ENCODE measurements at regions of chr14 and their contacts with region 1.

Region 1: GRCh38 chr14:74257078-74257989 is 18.1 kb downstream of the VSX2 start:
- DNase-seq: no peak
- H3K4me3 ChIP-seq: peak overlapping the region; percentile 57
- H3K27ac ChIP-seq: no peak overlapping the region
- H3K27me3 ChIP-seq: peaks cover 55% of the 10 kb centered on the region
- CTCF ChIP-seq: peak; percentile 68

Region 2: DNA sequence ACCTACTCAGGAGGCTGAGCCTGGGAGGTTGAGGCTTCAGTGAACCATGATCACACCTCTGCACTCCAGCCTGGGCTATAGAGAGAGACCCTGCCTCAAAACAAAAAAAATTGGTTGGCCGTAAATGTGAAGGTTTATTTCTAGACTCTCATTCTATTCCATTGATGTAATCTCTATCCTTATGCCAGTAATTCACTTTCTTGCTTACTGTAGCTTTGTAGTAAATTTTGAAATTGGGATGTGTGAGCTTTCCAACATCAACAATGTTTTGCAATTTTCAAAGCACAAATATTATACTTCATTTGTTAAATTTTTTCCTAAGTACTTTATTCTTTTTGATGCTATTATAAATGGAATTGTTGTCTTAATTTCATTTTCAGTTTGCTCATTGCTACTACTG is 148.0 kb before region 1 on chr14:
- CTCF ChIA-PET with region 1: interaction called, 39 read pairs
- POLR2A ChIA-PET with region 1: no interaction called
- DNase-seq: no peak
- H3K4me3 ChIP-seq: no peak overlapping the region
- H3K27ac ChIP-seq: no peak overlapping the region
- H3K27me3 ChIP-seq: no peaks in the 10 kb centered on the region
- CTCF ChIP-seq: no peak

Region 3: GRCh38 chr14:74179856-74180255 is 77.5 kb before region 1 on chr14:
- CTCF ChIA-PET with region 1: no interaction called
- POLR2A ChIA-PET with region 1: no interaction called
- DNase-seq: no peak
- H3K4me3 ChIP-seq: no peak overlapping the region
- H3K27ac ChIP-seq: no peak overlapping the region
- H3K27me3 ChIP-seq: no peaks in the 10 kb centered on the region
- CTCF ChIP-seq: no peak

Region 4: GRCh38 chr14:74246542-74246941 is 10.8 kb before region 1 on chr14:
- CTCF ChIA-PET with region 1: interaction called, 19 read pairs
- POLR2A ChIA-PET with region 1: no interaction called
- DNase-seq: no peak
- H3K4me3 ChIP-seq: no peak overlapping the region
- H3K27ac ChIP-seq: no peak overlapping the region
- H3K27me3 ChIP-seq: peaks cover 70% of the 10 kb centered on the region
- CTCF ChIP-seq: no peak

Region 5: DNA sequence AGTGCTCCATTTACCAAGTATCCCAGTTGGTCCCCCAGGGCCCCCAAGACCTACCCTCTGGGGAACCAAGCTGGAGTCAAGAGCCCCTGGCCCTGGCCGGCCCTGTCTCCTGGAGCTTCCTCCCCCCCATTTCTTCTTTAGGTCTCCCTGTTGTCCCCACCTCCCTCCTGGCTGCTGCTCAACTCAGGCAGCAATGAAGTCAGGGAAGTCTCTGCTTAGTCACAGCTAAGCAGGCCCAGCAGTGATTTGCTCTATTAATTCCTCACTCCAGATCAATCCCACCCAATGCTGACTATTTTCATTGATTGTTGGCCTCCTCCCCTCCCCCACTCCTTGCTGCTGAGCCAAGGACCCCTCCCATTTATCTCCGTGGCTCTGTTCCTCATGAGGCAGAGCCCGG is 10.3 kb after region 1 on chr14:
- CTCF ChIA-PET with region 1: interaction called, 34 read pairs
- POLR2A ChIA-PET with region 1: no interaction called
- DNase-seq: no peak
- H3K4me3 ChIP-seq: no peak overlapping the region
- H3K27ac ChIP-seq: no peak overlapping the region
- H3K27me3 ChIP-seq: peaks cover 11% of the 10 kb centered on the region
- CTCF ChIP-seq: no peak

Region 6: GRCh38 chr14:74302634-74303577 is 45.6 kb after region 1 on chr14 and contains the start of gene ABCD4:
- CTCF ChIA-PET with region 1: interaction called, 11 read pairs
- POLR2A ChIA-PET with region 1: no interaction called
- DNase-seq: peak; percentile 65
- H3K4me3 ChIP-seq: peak within 1 kb of the TSS; percentile 87
- H3K27ac ChIP-seq: peak within 1 kb of the TSS; percentile 47
- H3K27me3 ChIP-seq: no peaks in the 10 kb centered on the region
- CTCF ChIP-seq: peak; percentile 48
- polyA plus RNA-seq, gene ABCD4: 13.3 and 14.7 TPM in 2 replicates

Region 7: GRCh38 chr14:74368846-74369245 is 111.5 kb after region 1 on chr14:
- CTCF ChIA-PET with region 1: no interaction called
- POLR2A ChIA-PET with region 1: no interaction called
- DNase-seq: no peak
- H3K4me3 ChIP-seq: no peak overlapping the region
- H3K27ac ChIP-seq: no peak overlapping the region
- H3K27me3 ChIP-seq: peaks cover 12% of the 10 kb centered on the region
- CTCF ChIP-seq: no peak